ENCODE measurements at regions of chr21 and their contacts with region 1.

Region 1: DNA sequence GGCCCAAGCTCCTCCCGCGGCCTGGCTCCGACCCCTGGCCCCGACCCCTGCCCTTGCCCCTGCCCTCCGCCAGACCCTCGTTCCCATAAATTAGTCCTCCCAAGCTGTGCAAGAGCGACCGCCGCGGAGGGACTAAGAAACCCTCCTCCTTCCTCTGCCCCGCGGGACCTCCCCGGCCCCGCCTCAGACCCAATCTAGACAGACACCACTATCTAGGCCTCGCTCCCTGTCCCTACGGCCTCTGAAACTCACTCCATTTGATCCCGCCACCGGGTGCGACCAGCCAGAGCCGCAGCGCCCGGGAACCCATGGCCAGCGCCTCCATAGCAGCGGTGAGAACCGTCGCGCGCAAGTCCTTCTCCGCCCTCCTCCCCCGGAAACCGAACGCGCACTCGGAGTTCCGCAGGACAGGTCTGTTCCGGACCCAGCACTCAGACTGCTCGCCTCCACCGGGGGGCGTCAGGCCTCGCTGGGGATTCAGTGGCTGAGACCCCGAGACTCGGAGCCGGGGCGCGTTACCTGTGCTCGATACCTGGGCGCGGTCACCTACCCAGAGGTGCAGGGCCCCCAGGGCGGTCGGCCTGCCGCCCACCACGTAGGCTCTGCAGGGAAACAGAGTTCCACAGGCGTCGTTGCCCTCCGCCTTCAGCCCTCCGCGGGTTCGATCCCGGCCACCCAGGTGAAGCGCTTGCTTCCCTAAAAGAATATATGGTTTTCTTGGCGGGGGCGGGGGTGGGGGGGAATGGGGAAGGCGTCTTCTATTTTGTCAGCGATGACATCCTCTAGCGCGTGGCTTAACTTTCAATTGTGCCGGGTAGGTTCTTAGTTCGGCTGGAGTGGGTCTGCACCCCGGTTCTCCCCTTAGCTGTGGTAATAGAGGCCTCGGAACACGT is at the start of gene MRPL39:
- DNase-seq: peak; percentile 61 to 76
- ATAC-seq: peak; percentile 93 to 95
- H3K4me3 ChIP-seq: peak within 1 kb of the TSS; percentile 91 to 99 (median 94)
- H3K27ac ChIP-seq: peak within 1 kb of the TSS; percentile 86 to 92 (median 90)
- H3K4me1 ChIP-seq: peaks cover 20 to 21% of the 10 kb centered on the region in 2 donors
- H3K27me3 ChIP-seq: no peaks in the 10 kb centered on the region
- CTCF ChIP-seq: peak in 4 of 5 experiments; percentile 27 to 59 (median 36)
- POLR2A ChIP-seq: no peak
- total RNA-seq, gene MRPL39: 27.1 to 56.6 (median 39.0) TPM

Region 2: DNA sequence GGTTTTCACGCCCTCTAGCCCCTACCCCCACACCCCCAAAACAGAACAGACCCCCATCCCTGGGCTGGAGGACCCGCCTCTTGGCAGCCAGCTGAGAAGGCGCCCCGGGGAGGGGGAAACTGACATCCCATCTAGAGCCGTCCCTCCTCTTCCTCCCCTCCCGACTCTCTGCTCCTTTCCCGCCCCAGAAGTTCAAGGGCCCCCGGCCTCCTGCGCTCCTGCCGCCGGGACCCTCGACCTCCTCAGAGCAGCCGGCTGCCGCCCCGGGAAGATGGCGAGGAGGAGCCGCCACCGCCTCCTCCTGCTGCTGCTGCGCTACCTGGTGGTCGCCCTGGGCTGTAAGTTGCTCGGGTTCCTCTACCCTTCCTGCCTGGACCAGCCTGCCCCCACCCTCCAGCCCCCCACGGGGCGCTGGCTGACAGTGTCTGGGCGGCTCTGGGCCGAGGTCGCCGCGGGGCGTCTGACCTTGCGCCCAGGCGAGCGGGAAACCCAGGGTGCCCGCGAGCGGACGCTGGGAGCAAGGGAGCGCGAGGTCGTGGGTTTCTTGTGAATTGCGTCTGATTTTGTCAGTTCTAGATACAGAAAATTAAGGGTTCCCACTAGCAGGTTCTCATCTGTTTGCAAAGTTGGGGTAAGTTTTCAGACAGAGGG is 32.3 kb after region 1 on chr21:
- in situ Hi-C with region 1: no loop called
- intact Hi-C with region 1: loop called (anchors 2 kb)
- DNase-seq: no peak
- ATAC-seq: peak; percentile 58 to 62
- H3K4me3 ChIP-seq: peak overlapping the region; percentile 65 to 85 (median 72)
- H3K27ac ChIP-seq: peak overlapping the region; percentile 66 to 82 (median 79)
- H3K4me1 ChIP-seq: peaks cover 0 to 8% of the 10 kb centered on the region in 2 donors
- H3K27me3 ChIP-seq: no peaks in the 10 kb centered on the region
- CTCF ChIP-seq: peak in 2 of 5 experiments; percentile 35 to 45
- POLR2A ChIP-seq: no peak

Region 3: DNA sequence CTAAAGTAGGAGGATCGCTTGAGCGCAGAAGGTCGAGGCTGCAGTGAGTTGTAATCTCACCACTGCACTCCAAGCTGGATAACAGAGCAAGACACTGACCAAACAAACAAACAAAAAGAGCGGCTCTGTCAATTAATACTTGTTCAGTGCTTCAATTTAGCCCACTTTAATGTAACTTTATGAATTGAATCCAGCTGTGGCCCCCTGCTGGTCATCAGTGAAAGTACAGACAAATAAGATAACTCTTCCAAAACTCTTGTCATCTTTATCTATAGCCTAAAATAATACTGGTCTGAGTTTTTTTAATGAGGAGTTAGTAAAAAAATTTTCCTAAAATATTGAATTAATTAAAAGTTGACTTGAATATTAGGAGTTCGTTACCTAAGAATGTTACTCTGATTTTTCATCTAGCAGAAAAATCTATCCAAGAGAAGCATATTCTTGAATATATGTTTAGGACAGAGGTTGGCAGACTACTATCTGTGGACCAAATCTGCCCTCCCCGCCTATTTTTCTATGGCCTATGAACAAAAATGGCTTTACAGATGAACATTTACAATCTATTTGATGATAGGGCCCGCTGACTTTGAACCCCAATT is 101.2 kb after region 1 on chr21:
- in situ Hi-C with region 1: loop called in 3 of 4 experiments (anchors 5 kb)
- intact Hi-C with region 1: loop called (anchors 1 kb)
- DNase-seq: no peak
- ATAC-seq: no peak
- H3K4me3 ChIP-seq: no peak overlapping the region
- H3K27ac ChIP-seq: no peak overlapping the region
- H3K4me1 ChIP-seq: no peaks in the 10 kb centered on the region
- H3K27me3 ChIP-seq: no peaks in the 10 kb centered on the region
- CTCF ChIP-seq: peak; percentile 49 to 79 (median 66)
- POLR2A ChIP-seq: no peak

Region 4: DNA sequence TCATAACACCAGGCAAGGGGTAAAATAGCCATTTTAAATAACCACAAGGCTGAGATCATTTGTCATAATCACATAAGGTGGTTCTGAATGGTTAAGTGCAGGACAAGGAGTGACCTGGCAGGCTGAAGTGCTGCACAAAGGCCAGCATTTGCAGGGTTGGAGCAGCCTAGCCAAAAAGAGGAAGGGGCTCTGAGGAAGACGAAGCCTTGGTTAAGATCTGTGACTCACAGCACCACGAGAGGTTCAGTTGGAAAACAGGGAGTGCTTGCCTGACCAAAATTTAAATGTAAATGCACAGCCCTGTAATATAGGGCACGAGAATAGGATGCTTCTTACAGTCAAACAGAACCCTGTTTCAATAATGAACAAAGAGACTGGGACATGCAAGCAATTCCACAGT is 115.2 kb after region 1 on chr21:
- in situ Hi-C with region 1: loop called in 1 of 4 experiments (anchors 10 kb)
- intact Hi-C with region 1: no loop called
- DNase-seq: no peak
- ATAC-seq: no peak
- H3K4me3 ChIP-seq: no peak overlapping the region
- H3K27ac ChIP-seq: no peak overlapping the region
- H3K4me1 ChIP-seq: peaks cover 2 to 10% of the 10 kb centered on the region in 2 donors
- H3K27me3 ChIP-seq: no peaks in the 10 kb centered on the region
- CTCF ChIP-seq: no peak
- POLR2A ChIP-seq: no peak

Region 5: DNA sequence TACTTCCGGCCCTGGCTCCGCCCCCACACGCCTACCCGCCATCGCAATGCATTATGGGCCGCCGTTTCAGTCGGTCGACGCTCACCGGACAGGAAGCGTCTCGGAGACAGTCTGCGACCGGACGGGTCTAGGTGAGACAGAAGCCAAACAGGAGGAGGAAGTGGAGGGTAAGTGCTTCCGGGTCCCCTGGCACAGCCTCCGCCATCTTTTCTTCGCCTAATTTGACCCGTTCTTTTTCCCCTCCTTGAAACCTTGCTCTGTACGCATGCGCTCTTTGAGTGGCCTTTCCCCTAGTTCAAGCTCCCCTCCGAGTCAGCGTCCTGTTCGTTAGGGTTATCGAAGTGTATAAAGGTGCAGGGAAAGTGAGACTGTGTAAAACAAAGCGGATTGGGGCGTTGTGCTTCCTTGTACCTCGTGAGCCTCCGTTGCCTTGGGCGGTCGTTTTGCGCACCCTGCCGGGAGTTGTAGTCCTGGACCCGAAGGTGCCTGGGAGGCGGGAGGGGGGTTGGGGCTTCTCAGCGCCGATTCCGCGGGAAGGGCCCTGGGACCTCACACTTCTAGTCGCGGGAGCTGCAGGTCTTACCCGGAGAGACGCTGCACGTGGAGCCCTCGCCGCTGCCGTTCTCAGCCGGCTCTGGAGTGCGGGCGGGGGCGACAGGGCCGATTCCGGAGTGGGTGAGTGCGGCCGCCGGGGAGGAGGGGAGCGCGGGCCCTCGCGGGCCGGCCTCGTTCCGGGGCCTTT is 127.7 kb after region 1 on chr21 and contains the starts of genes ATP5PF and GABPA:
- in situ Hi-C with region 1: loop called in 1 of 4 experiments (anchors 10 kb)
- intact Hi-C with region 1: loop called (anchors 1 kb)
- DNase-seq: peak; percentile 97 to 98
- ATAC-seq: peak; percentile 90 to 94
- H3K4me3 ChIP-seq: peak within 1 kb of the TSS; percentile 81 to 98 (median 92)
- H3K27ac ChIP-seq: peak within 1 kb of the TSS; percentile 94 to 99 (median 98)
- H3K4me1 ChIP-seq: peaks cover 57 to 58% of the 10 kb centered on the region in 2 donors
- H3K27me3 ChIP-seq: no peaks in the 10 kb centered on the region
- CTCF ChIP-seq: no peak
- POLR2A ChIP-seq: peak in 1 of 2 donors; percentile 46
- total RNA-seq, gene ATP5PF: 155 to 306 (median 198) TPM
- total RNA-seq, gene GABPA: 10.6 to 26.2 (median 15.5) TPM

Region 6: GRCh38 chr21:25801217-25802014 is 194.0 kb after region 1 on chr21:
- in situ Hi-C with region 1: no loop called
- intact Hi-C with region 1: loop called (anchors 5 kb)
- DNase-seq: peak; percentile 24 to 48
- ATAC-seq: peak in 1 of 2 donors; percentile 64
- H3K4me3 ChIP-seq: no peak overlapping the region
- H3K27ac ChIP-seq: no peak overlapping the region
- H3K4me1 ChIP-seq: no peaks in the 10 kb centered on the region
- H3K27me3 ChIP-seq: no peaks in the 10 kb centered on the region
- CTCF ChIP-seq: peak; percentile 63 to 83 (median 74)
- POLR2A ChIP-seq: no peak

Measured in gastrocnemius medialis (tissue), 4 donors.